PC-9 (cell line): ENCODE measurements at regions of chr3 and their contacts with region 1.

Region 1: DNA sequence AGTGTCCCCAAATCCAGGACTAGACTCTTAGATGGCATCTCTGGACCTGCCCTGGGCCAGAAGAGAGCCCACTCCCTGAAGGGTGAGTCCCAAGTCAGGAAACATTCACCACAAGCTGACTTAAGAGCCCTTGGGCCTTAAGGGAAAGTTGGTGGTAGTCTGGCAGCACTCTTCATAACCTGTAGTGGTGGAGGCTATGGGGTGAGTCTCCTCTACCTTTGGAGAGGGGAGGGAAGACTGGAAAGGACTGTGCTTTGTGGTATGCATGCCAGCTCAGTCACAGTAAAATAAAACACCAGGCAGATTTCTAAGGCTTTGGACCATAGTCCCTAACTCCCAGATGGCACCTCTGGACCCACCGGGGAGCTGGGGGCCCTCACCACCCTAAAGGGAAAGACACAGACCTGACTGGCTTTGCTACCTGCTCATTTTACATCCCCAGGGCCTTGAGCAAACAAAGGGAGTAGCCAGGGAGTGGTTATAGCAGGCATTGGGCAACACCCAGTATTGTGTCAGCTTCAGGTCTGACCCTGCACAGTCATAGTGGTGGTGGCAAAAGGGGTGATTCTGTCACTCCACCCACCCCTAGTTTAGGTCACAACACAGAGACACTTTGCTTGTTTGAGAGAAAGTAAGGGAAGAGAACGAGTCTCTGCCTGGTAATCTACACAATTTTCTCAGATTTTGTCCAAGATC is 352.3 kb downstream of the DIPK2A start:
- DNase-seq: peak; percentile 74 to 85
- H3K4me3 ChIP-seq: no peak overlapping the region
- H3K27ac ChIP-seq: peak overlapping the region; percentile 60
- H3K4me1 ChIP-seq: peaks cover 26% of the 10 kb centered on the region
- H3K27me3 ChIP-seq: no peaks in the 10 kb centered on the region
- CTCF ChIP-seq: no peak

Region 2: GRCh38 chr3:144272680-144273079 is 51.3 kb before region 1 on chr3:
- CTCF ChIA-PET with region 1: no interaction called
- POLR2A ChIA-PET with region 1: no interaction called
- intact Hi-C with region 1: no loop called
- DNase-seq: no peak
- H3K4me3 ChIP-seq: no peak overlapping the region
- H3K27ac ChIP-seq: no peak overlapping the region
- H3K4me1 ChIP-seq: no peaks in the 10 kb centered on the region
- H3K27me3 ChIP-seq: no peaks in the 10 kb centered on the region
- CTCF ChIP-seq: no peak

Region 3: DNA sequence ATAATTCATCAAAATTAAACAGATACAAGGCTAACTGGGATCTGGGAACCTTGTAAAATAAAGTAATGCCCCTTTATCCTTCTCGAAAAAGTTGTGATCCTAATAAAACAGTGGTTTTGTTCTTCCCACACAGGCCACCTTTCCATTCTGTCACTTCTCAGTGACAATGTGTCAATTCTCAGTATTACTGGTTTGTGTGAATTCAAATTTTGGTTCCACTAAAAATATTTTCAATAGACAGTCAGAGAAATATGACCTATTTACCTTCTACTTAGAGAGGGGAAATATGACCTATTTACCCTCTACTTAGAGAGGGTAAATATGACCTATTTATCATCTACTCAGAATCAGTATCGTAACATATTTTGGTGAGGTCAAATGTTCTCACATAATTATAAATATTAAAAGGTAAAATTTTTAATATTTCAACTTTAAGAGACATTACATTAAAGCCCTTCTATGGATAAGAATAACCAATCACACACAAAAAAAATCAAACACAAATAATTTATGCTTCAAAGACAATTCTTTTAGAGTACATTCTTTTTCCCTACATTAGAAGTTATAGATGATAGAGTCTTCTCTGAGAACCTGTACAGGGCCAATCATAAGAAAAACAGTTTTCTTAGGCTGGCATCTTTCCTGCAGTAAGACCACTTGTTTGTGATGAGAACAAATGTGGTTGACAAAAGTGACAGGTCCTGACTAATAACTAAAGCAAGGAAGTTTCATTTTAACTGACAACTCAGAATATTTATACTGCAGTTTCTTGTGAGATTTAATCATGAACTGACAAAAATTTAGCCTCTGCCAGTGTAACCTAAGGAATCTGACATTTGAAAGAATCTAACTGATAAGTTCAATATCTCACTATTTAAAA is 29.0 kb before region 1 on chr3:
- CTCF ChIA-PET with region 1: no interaction called
- POLR2A ChIA-PET with region 1: no interaction called
- intact Hi-C with region 1: loop called (anchors 1 kb)
- DNase-seq: no peak
- H3K4me3 ChIP-seq: no peak overlapping the region
- H3K27ac ChIP-seq: no peak overlapping the region
- H3K4me1 ChIP-seq: peaks cover 18% of the 10 kb centered on the region
- H3K27me3 ChIP-seq: no peaks in the 10 kb centered on the region
- CTCF ChIP-seq: no peak

Region 4: DNA sequence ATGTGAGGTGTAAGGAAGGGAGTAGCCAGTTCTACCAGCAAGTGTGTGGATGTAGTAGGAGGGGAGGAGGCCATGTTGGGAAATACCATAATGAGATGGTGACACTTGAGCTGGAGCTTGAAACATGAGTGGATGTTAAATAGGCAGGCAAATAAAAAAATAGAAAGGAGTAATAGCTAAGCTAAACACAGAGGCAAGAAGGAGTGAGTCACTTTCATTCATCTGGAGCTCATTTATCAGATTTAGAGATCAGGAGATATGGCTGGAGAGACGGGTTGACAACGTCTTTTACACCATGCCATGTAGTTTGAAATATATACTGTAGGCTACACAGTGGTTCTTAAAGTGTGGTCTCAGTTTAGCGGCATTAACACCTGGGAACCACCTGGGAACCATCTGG is 38.2 kb after region 1 on chr3:
- CTCF ChIA-PET with region 1: no interaction called
- POLR2A ChIA-PET with region 1: no interaction called
- intact Hi-C with region 1: loop called (anchors 5 kb)
- DNase-seq: peak; percentile 33 to 81
- H3K4me3 ChIP-seq: 0 out of 2 replicates have a peak overlapping the region, but pooled peaks have one; percentile 9
- H3K27ac ChIP-seq: peak overlapping the region; percentile 40; the same call in 1 of the 2 replicates
- H3K4me1 ChIP-seq: peaks cover 20% of the 10 kb centered on the region
- H3K27me3 ChIP-seq: no peaks in the 10 kb centered on the region
- CTCF ChIP-seq: no peak

Region 5: DNA sequence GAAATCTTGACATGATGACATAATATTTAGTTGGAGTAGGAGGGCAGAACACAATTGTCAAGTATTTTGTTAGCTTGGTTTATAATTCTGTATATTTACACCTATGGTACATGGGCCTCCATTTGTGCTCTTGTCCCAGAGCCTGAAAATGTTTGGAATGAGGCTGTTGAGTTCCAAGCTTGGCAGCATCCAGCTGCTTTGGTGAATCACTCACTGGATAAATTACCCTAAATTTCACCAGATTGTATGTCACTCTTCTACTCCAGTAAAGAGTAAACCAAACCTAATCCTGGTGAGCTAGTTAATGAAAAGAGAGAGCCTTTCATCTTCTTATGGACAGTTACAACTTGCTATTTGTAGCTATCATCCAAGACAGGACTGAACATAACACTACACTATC is 576.4 kb after region 1 on chr3:
- CTCF ChIA-PET with region 1: no interaction called
- POLR2A ChIA-PET with region 1: no interaction called
- intact Hi-C with region 1: no loop called
- DNase-seq: no peak
- H3K4me3 ChIP-seq: no peak overlapping the region
- H3K27ac ChIP-seq: no peak overlapping the region
- H3K4me1 ChIP-seq: no peaks in the 10 kb centered on the region
- H3K27me3 ChIP-seq: no peaks in the 10 kb centered on the region
- CTCF ChIP-seq: no peak

Region 6: GRCh38 chr3:145716519-145716918 is 1392.6 kb after region 1 on chr3:
- CTCF ChIA-PET with region 1: no interaction called
- POLR2A ChIA-PET with region 1: no interaction called
- intact Hi-C with region 1: no loop called
- DNase-seq: no peak
- H3K4me3 ChIP-seq: no peak overlapping the region
- H3K27ac ChIP-seq: no peak overlapping the region
- H3K4me1 ChIP-seq: no peaks in the 10 kb centered on the region
- H3K27me3 ChIP-seq: no peaks in the 10 kb centered on the region
- CTCF ChIP-seq: no peak